Activated CD8-positive, alpha-beta memory T cell treated with anti-CD3 and anti-CD28 coated beads, Interleukin-2, amount 10 ng/mL, durations not matched to agents 7 days and 5 days (primary cell): ENCODE measurements at regions of chr1 and their contacts with region 1.

Region 1: DNA sequence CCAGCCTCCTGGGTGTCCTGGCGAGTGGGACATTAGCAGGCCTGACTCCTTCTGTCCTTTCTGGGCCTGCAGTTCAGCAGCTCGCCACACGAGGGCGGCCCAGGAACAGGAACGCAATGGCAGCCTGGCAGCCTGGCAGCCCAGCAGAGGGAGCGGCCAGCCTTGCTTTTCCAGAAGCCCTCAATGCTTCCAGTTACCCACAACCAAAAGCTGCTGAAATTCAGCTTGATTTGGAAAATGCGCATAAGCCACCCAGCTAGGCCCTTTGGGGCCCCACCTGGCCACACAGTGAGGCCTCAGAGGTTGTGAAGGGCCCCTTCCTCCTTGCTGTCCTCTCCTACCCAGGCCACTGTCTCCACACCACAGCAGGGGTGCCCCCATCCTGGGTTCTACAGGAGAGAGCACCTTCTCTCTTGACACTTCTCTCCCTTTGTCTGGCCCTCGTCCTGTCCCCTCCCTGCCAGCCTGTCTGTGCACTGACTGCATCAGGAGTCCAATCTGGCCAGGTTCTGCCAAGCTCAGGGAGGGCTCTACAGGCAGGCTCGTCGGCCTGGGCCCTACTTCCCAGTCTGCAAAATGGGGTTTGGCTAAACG is 103.4 kb upstream of the VAMP3 start:
- DNase-seq: peak; percentile 85
- ATAC-seq: peak; percentile 72
- H3K4me3 Mint-ChIP-seq: no peak overlapping the region
- H3K27ac Mint-ChIP-seq: no peak overlapping the region
- H3K4me1 Mint-ChIP-seq: peaks cover 4% of the 10 kb centered on the region
- H3K27me3 Mint-ChIP-seq: no peaks in the 10 kb centered on the region

Region 2: GRCh38 chr1:7680207-7680954 is 12.7 kb after region 1 on chr1:
- CTCF ChIA-PET with region 1: interaction called, 65 read pairs
- DNase-seq: no peak
- ATAC-seq: peak; percentile 61
- H3K4me3 Mint-ChIP-seq: peak overlapping the region; percentile 71
- H3K27ac Mint-ChIP-seq: no peak overlapping the region
- H3K4me1 Mint-ChIP-seq: no peaks in the 10 kb centered on the region
- H3K27me3 Mint-ChIP-seq: peaks cover 15% of the 10 kb centered on the region

Region 3: GRCh38 chr1:7745791-7746190 is 78.1 kb after region 1 on chr1:
- CTCF ChIA-PET with region 1: interaction called, 426 read pairs
- DNase-seq: no peak
- ATAC-seq: no peak
- H3K4me3 Mint-ChIP-seq: no peak overlapping the region
- H3K27ac Mint-ChIP-seq: no peak overlapping the region
- H3K4me1 Mint-ChIP-seq: peaks cover 8% of the 10 kb centered on the region
- H3K27me3 Mint-ChIP-seq: peaks cover 8% of the 10 kb centered on the region

Region 4: GRCh38 chr1:7760245-7760644 is 92.5 kb after region 1 on chr1:
- CTCF ChIA-PET with region 1: interaction called, 426 read pairs
- DNase-seq: no peak
- ATAC-seq: no peak
- H3K4me3 Mint-ChIP-seq: no peak overlapping the region
- H3K27ac Mint-ChIP-seq: no peak overlapping the region
- H3K4me1 Mint-ChIP-seq: peaks cover 4% of the 10 kb centered on the region
- H3K27me3 Mint-ChIP-seq: peaks cover 13% of the 10 kb centered on the region

Region 5: DNA sequence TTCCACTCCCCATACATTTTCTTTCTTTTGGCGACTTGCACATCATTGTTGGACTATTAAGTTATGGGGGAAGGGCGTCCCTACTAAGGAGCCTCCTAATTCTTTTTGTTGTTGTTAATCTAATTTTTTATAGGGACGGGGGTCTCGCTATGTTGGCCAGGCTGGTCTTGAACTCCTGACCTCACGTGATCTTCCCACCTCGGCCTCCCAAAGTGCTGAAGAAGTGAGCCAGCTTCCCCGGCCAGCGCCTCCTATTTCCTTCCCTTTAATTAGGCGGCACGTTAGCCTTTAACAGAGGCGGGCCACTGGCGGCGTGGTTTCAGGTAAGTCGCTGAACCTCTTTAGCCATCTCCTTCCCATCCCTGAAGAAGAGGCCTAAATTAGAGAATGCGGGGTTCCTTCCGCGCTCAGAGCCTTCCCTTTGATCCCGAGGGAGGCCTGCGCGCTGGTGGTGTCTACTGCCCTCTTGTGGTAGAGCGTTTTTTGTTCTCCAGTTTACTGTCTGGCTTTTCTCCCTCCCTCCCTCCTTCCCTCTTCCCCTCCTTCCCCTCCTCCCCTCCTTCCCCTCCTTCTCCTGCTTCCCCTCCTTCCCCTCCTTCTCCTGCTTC is 234.9 kb after region 1 on chr1:
- CTCF ChIA-PET with region 1: interaction called, 23 read pairs
- DNase-seq: peak; percentile 68
- ATAC-seq: peak; percentile 90
- H3K4me3 Mint-ChIP-seq: peak overlapping the region; percentile 43
- H3K27ac Mint-ChIP-seq: no peak overlapping the region
- H3K4me1 Mint-ChIP-seq: peaks cover 11% of the 10 kb centered on the region
- H3K27me3 Mint-ChIP-seq: no peaks in the 10 kb centered on the region

Region 6: DNA sequence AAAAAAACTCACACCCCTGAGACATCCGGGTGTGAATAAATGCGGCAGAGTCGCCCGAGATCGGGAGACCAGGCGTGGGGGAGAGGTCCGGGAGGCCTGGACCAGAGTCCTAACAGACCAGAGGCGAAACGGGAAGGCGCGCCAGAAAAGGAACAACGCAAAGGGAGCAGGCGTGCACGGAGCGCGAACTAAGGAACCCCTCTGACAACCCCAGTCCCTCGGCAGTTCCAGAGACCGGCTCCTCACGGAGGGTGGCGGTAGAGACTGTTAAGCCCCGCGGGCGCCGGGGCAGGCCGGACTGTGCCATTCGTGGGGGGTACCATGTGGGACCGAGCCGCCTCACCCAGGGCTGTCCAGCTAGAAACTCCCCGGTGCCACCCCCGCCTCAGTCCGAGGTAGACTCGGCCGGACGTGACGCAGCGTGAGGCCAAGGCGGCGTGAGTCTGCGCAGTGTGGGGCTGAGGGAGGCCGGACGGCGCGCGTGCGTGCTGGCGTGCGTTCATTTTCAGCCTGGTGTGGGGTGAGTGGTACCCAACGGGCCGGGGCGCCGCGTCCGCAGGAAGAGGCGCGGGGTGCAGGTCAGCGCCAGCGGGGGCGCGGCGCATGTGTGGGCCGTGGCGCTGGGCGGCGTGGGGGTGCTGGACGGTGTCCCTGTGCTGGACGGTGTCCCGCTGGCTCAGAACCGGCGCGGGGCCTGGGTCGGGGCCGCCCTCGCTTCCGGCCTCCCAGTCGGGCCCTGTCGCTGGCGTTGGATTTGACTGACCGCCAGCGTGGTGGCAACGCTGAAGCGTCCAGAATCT is 293.7 kb after region 1 on chr1 and contains the start of gene PARK7:
- CTCF ChIA-PET with region 1: no interaction called
- DNase-seq: peak; percentile 100
- ATAC-seq: peak; percentile 94
- H3K4me3 Mint-ChIP-seq: peak within 1 kb of the TSS; percentile 95
- H3K27ac Mint-ChIP-seq: peak within 1 kb of the TSS; percentile 98
- H3K4me1 Mint-ChIP-seq: peaks cover 64% of the 10 kb centered on the region
- H3K27me3 Mint-ChIP-seq: no peaks in the 10 kb centered on the region
- total RNA-seq, gene PARK7: 310 to 434 TPM